Naive thymus-derived CD4-positive, alpha-beta T cell (primary cell): ENCODE measurements at regions of chr6 and their contacts with region 1.

Region 1: GRCh38 chr6:89352278-89353117 is at the start of gene UBE2J1:
- DNase-seq: peak; percentile 34 to 87 (median 61)
- ATAC-seq: peak; percentile 89
- H3K4me3 ChIP-seq: peak within 1 kb of the TSS; percentile 67
- H3K4me3 Mint-ChIP-seq: peak within 1 kb of the TSS; percentile 96 to 100 (median 98)
- H3K27ac ChIP-seq: peak within 1 kb of the TSS; percentile 88
- H3K27ac Mint-ChIP-seq: peak within 1 kb of the TSS; percentile 95 to 98 (median 97)
- H3K4me1 ChIP-seq: peaks cover 27 to 30% of the 10 kb centered on the region in 2 donors
- H3K4me1 Mint-ChIP-seq: peaks cover 44 to 81% (median 72%) of the 10 kb centered on the region in 7 donors
- H3K27me3 ChIP-seq: no peaks in the 10 kb centered on the region
- H3K27me3 Mint-ChIP-seq: no peaks in the 10 kb centered on the region
- total RNA-seq, gene UBE2J1: 18.8 to 47.7 (median 27.7) TPM

Region 2: DNA sequence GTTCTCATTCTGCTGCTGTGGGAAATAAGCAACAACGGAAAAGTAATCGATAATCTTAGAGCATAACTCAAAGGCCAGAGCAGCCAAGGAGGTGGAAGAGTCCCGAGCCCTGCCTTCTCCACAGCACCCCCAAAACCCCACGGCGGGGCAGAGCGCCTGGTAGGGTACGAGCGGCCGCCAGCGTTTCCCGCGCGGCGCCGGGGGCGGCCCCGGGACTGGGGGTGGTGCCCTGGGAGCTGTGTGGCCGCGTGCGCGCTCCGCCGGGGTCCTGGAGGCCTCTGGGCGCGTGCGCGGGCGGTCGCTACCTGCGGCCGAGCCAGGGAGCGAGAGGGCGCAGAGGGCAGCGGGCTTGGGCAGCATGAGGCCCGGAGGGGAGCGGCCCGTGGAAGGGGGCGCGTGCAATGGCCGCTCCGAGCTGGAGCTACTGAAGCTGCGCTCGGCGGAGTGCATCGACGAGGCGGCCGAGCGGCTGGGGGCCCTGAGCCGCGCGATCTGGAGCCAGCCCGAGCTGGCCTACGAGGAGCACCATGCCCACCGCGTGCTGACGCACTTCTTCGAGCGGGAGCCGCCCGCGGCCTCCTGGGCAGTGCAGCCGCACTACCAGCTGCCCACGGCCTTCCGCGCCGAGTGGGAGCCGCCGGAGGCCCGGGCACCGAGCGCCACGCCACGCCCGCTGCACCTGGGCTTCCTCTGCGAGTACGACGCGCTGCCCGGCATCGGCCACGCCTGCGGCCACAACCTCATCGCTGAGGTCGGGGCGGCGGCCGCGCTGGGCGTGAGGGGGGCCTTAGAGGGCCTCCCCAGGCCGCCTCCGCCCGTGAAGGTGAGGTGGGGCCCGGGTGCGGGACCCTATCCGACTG is 206.5 kb before region 1 on chr6 and contains the start of gene PM20D2:
- CTCF ChIA-PET with region 1: no interaction called
- POLR2A ChIA-PET with region 1: interaction called, 4 read pairs
- intact Hi-C with region 1: loop called (anchors 2 kb)
- DNase-seq: peak; percentile 45 to 78 (median 59)
- ATAC-seq: peak; percentile 84
- H3K4me3 ChIP-seq: peak within 1 kb of the TSS; percentile 58
- H3K4me3 Mint-ChIP-seq: peak within 1 kb of the TSS; percentile 86 to 99 (median 94)
- H3K27ac ChIP-seq: peak within 1 kb of the TSS; percentile 73
- H3K27ac Mint-ChIP-seq: peak within 1 kb of the TSS; percentile 84 to 98 (median 95)
- H3K4me1 ChIP-seq: peaks cover 5 to 10% of the 10 kb centered on the region in 2 donors
- H3K4me1 Mint-ChIP-seq: peaks cover 16 to 39% (median 23%) of the 10 kb centered on the region in 7 donors
- H3K27me3 ChIP-seq: no peaks in the 10 kb centered on the region
- H3K27me3 Mint-ChIP-seq: peaks cover 0 to 14% (median 0%) of the 10 kb centered on the region in 5 donors
- total RNA-seq, gene PM20D2: 4.6 to 12.7 (median 9.5) TPM

Region 3: GRCh38 chr6:89297695-89298351 is 54.7 kb before region 1 on chr6:
- CTCF ChIA-PET with region 1: no interaction called
- POLR2A ChIA-PET with region 1: no interaction called
- intact Hi-C with region 1: loop called (anchors 1 kb)
- DNase-seq: peak in 4 of 9 donors; percentile 19 to 72 (median 24)
- ATAC-seq: peak; percentile 78
- H3K4me3 ChIP-seq: no peak overlapping the region
- H3K4me3 Mint-ChIP-seq: peak overlapping the region in 9 of 10 donors; percentile 12 to 69 (median 34)
- H3K27ac ChIP-seq: no peak overlapping the region
- H3K27ac Mint-ChIP-seq: peak overlapping the region; percentile 15 to 95 (median 63)
- H3K4me1 ChIP-seq: peaks cover 16 to 17% of the 10 kb centered on the region in 2 donors
- H3K4me1 Mint-ChIP-seq: peaks cover 13 to 22% (median 18%) of the 10 kb centered on the region in 7 donors
- H3K27me3 ChIP-seq: no peaks in the 10 kb centered on the region
- H3K27me3 Mint-ChIP-seq: no peaks in the 10 kb centered on the region

Region 4: DNA sequence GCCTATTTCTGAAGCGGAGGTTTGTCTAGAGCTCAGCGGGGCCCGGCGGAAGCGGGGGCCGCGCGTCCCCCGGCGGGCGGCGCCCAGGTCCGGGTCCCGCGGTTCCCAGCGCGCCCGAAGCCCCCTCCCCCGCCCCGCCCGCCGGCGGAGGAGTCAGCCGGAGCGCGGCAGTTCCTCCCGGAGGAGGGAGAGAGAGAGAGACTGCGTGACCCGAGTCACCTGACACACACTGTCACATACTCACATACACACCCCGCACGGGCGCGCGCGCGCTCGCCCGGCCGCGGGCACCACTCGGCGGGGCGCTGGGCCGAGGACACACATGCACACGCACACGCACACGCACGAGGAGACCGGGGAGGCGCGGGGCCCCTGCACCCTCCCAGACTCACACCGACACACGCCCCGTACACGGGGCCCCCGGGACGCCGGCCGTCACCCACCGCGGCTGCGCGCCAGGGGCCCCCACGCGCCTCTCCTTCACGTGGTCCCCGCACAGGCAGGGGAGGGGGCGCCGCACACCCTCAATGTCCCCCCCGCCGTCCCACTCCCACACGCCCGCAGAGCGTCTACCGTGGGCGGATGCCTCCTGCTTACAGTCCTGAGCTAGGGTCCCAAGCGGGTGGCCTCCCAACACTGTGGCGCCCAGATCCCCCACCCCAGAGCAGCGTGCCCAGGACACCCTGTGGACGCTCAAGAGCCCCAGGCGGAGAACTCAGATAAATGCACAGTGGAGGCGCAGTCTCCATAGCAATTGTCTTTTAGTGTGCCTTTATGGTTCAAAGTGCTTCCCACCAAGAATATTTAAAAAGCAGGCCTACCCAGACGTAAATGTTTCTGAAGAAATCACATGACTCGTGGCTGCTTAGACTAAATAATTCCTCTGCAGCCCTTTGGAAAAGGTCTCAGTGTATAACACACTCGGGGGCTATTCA is 59.8 kb after region 1 on chr6 and contains the start of gene RRAGD:
- CTCF ChIA-PET with region 1: no interaction called
- POLR2A ChIA-PET with region 1: interaction called, 3 read pairs
- intact Hi-C with region 1: loop called in 1 of 2 experiments (anchors 5 kb)
- DNase-seq: peak; percentile 51 to 69 (median 61)
- ATAC-seq: peak; percentile 90
- H3K4me3 ChIP-seq: peak within 1 kb of the TSS; percentile 79
- H3K4me3 Mint-ChIP-seq: peak within 1 kb of the TSS; percentile 87 to 100 (median 97)
- H3K27ac ChIP-seq: peak within 1 kb of the TSS; percentile 57
- H3K27ac Mint-ChIP-seq: peak within 1 kb of the TSS; percentile 53 to 98 (median 88)
- H3K4me1 ChIP-seq: peaks cover 8% of the 10 kb centered on the region in 2 donors
- H3K4me1 Mint-ChIP-seq: peaks cover 2 to 24% (median 19%) of the 10 kb centered on the region in 7 donors
- H3K27me3 ChIP-seq: no peaks in the 10 kb centered on the region
- H3K27me3 Mint-ChIP-seq: peaks cover 6 to 64% (median 18%) of the 10 kb centered on the region in 5 donors
- total RNA-seq, gene RRAGD: 7.3 to 12.1 (median 9.6) TPM